CD4-positive, alpha-beta memory T cell (primary cell): ENCODE measurements at regions of chr3 and their contacts with region 1.

Region 1: DNA sequence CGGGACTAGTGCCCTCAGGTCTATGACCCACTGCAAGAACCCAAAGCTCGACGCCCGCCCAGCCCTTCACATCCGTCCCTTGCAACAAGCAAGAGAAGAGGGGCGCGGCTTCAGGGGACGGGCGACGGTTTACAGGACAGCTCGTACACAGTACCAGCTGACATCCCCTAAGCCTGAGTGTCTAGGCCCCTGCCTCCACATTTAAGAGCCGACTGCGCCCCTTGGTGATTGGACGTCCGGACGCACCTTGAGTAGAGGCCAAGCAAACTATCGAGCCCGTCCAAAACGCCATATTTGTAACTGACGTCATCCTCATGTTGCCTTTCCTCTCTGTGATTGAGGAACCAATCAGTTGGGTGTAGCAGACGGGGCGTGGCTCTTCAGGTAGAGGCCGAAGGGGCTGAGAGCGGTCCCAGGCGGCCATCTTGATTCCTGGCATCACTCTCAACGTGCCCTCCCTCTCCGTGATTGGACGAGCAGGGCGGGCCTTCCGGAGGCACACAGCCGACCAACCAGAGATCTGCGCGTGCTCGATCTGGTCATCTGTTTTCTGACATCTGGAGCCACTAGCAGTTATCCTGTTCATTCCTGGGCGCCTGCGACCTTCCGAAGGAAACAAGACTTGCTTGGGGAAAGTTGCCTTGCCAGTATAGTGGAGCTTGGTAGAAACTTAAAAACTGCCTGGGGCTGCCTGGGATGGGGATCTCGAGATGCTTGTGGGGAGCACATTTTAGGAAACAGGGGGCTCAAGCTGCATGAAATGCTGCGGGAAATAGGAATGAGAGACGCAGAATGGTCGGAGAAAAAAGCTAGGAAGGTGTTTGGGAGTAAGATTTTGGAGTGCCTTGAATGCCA is 4.0 kb upstream of the RPL14 start:
- DNase-seq: peak; percentile 92 to 99 (median 96)
- H3K4me3 ChIP-seq: peak overlapping the region; percentile 80 to 81
- H3K4me3 Mint-ChIP-seq: peak overlapping the region; percentile 88 to 98 (median 94)
- H3K27ac ChIP-seq: peak overlapping the region; percentile 93
- H3K27ac Mint-ChIP-seq: peak overlapping the region; percentile 93 to 100 (median 99)
- H3K4me1 ChIP-seq: peaks cover 30% of the 10 kb centered on the region
- H3K4me1 Mint-ChIP-seq: peaks cover 23 to 47% (median 35%) of the 10 kb centered on the region in 4 donors
- H3K27me3 ChIP-seq: no peaks in the 10 kb centered on the region
- H3K27me3 Mint-ChIP-seq: no peaks in the 10 kb centered on the region

Region 2: GRCh38 chr3:39383045-39383880 is 1069.8 kb before region 1 on chr3 and contains the start of gene SLC25A38:
- CTCF ChIA-PET with region 1: no interaction called
- POLR2A ChIA-PET with region 1: no interaction called
- intact Hi-C with region 1: loop called (anchors 10 kb)
- DNase-seq: peak; percentile 82 to 90 (median 85)
- H3K4me3 ChIP-seq: peak within 1 kb of the TSS; percentile 91 to 92
- H3K4me3 Mint-ChIP-seq: peak within 1 kb of the TSS; percentile 96 to 100 (median 98)
- H3K27ac ChIP-seq: peak within 1 kb of the TSS; percentile 93
- H3K27ac Mint-ChIP-seq: peak within 1 kb of the TSS; percentile 97 to 100 (median 100)
- H3K4me1 ChIP-seq: peaks cover 46% of the 10 kb centered on the region
- H3K4me1 Mint-ChIP-seq: peaks cover 31 to 53% (median 44%) of the 10 kb centered on the region in 4 donors
- H3K27me3 ChIP-seq: no peaks in the 10 kb centered on the region
- H3K27me3 Mint-ChIP-seq: no peaks in the 10 kb centered on the region
- total RNA-seq, gene SLC25A38: 46.0 to 53.5 TPM

Region 3: GRCh38 chr3:40309418-40309924 is 143.6 kb before region 1 on chr3 and contains the start of gene EIF1B:
- CTCF ChIA-PET with region 1: interaction called, 8 read pairs
- POLR2A ChIA-PET with region 1: interaction called, 10 read pairs
- intact Hi-C with region 1: loop called (anchors 1 kb)
- DNase-seq: peak; percentile 96 to 99 (median 98)
- H3K4me3 ChIP-seq: peak within 1 kb of the TSS; percentile 68 to 77
- H3K4me3 Mint-ChIP-seq: peak within 1 kb of the TSS; percentile 98 to 100 (median 100)
- H3K27ac ChIP-seq: peak within 1 kb of the TSS; percentile 95
- H3K27ac Mint-ChIP-seq: peak within 1 kb of the TSS; percentile 99 to 100 (median 100)
- H3K4me1 ChIP-seq: peaks cover 32% of the 10 kb centered on the region
- H3K4me1 Mint-ChIP-seq: peaks cover 13 to 48% (median 25%) of the 10 kb centered on the region in 4 donors
- H3K27me3 ChIP-seq: no peaks in the 10 kb centered on the region
- H3K27me3 Mint-ChIP-seq: no peaks in the 10 kb centered on the region
- total RNA-seq, gene EIF1B: 61.2 TPM

Region 4: GRCh38 chr3:40476478-40477470 is 23.7 kb after region 1 on chr3 and contains the start of gene ZNF619:
- CTCF ChIA-PET with region 1: no interaction called
- POLR2A ChIA-PET with region 1: interaction called, 22 read pairs
- intact Hi-C with region 1: loop called (anchors 1 kb)
- DNase-seq: peak; percentile 52 to 67 (median 59)
- H3K4me3 ChIP-seq: peak within 1 kb of the TSS; percentile 19 to 60
- H3K4me3 Mint-ChIP-seq: peak within 1 kb of the TSS; percentile 91 to 95 (median 94)
- H3K27ac ChIP-seq: peak within 1 kb of the TSS; percentile 68
- H3K27ac Mint-ChIP-seq: peak within 1 kb of the TSS; percentile 82 to 98 (median 95)
- H3K4me1 ChIP-seq: peaks cover 16% of the 10 kb centered on the region
- H3K4me1 Mint-ChIP-seq: peaks cover 14 to 38% (median 22%) of the 10 kb centered on the region in 4 donors
- H3K27me3 ChIP-seq: no peaks in the 10 kb centered on the region
- H3K27me3 Mint-ChIP-seq: no peaks in the 10 kb centered on the region
- total RNA-seq, gene ZNF619: 14.0 to 16.6 TPM

Region 5: DNA sequence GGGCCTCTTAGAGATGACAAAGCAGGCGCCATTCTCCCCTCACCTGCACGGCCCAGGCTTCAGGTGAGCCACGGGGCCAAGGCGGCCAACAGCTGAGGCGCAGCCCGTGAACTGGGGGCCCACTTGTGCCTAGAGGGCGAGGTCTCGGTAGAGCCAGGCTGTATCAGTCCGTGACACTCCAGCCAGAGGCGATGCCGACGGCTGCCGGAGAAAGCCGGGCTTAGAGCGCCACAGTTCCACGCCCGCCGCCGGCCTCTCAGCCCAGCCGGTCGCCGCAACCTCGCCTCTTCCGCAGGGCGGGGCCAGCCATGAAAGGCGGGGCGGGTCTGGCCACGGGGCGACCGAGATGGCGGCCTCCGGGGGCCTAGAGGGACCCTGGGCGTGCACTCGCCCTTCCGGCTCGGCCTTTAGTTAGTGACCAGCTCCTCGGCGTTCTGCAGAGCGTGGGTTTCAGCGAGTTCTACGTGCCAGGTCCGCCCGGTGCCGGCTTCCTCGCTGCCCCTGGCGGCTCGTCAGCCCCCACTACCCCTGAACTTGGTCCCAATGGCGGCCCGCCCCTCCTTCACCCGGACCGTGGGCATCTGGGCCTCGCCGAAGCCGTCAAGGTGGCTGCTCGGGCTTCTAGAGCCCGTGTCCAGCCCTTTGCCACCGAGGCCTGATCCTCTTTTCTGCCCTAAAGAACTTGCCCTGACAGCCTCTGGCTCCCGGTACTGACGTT is 71.6 kb after region 1 on chr3 and contains the start of gene ZNF621:
- CTCF ChIA-PET with region 1: interaction called, 4 read pairs
- POLR2A ChIA-PET with region 1: interaction called, 38 read pairs
- intact Hi-C with region 1: loop called (anchors 1 kb)
- DNase-seq: peak; percentile 67 to 83 (median 77)
- H3K4me3 ChIP-seq: peak within 1 kb of the TSS; percentile 62 to 89
- H3K4me3 Mint-ChIP-seq: peak within 1 kb of the TSS; percentile 92 to 97 (median 95)
- H3K27ac ChIP-seq: peak within 1 kb of the TSS; percentile 75
- H3K27ac Mint-ChIP-seq: peak within 1 kb of the TSS; percentile 79 to 98 (median 97)
- H3K4me1 ChIP-seq: peaks cover 21% of the 10 kb centered on the region
- H3K4me1 Mint-ChIP-seq: peaks cover 19 to 34% (median 28%) of the 10 kb centered on the region in 4 donors
- H3K27me3 ChIP-seq: no peaks in the 10 kb centered on the region
- H3K27me3 Mint-ChIP-seq: no peaks in the 10 kb centered on the region
- total RNA-seq, gene ZNF621: 23.7 to 27.4 TPM

Region 6: DNA sequence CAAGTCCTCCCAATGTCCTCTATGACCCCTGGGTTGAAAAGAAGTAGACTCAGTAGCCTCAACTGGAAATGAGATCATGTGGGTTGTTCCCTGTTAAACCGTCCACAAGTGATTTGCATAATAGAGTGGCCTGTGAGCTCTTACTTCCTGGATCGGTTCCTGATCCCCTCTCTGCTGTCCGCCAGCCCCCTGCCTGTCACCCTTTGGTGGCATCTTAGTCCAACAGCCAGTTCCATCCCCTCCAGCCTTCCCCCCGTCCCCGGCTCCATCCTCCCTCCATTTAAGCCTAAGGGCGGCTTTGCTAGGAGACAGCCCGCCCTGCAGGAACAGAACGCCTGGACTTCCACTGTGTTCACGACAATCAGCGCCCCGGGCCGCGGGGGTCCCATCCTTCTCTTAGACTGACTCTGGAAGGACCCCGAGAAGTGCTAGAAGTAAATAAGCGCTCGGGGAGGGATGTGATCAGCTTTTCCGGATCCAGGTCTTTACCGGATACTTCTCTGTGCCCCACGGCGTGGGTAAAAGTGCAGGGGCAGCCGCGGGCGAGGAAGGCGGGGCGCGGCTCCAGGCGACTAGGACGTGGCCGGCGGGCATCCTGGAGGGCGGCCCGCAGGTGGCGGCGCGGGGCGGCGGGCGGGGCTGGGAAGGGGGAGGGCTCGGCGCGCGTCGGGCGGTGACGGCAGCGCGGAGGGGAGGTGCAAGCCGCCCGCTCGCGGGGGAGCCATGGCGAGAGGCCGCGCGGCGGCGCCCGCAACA is 1560.0 kb after region 1 on chr3:
- CTCF ChIA-PET with region 1: no interaction called
- POLR2A ChIA-PET with region 1: interaction called, 4 read pairs
- intact Hi-C with region 1: loop called (anchors 5 kb)
- DNase-seq: peak; percentile 64 to 70 (median 66)
- H3K4me3 ChIP-seq: peak overlapping the region; percentile 50 to 85
- H3K4me3 Mint-ChIP-seq: peak overlapping the region; percentile 87 to 96 (median 92)
- H3K27ac ChIP-seq: peak overlapping the region; percentile 63
- H3K27ac Mint-ChIP-seq: peak overlapping the region; percentile 95 to 98 (median 97)
- H3K4me1 ChIP-seq: peaks cover 32% of the 10 kb centered on the region
- H3K4me1 Mint-ChIP-seq: peaks cover 24 to 45% (median 36%) of the 10 kb centered on the region in 4 donors
- H3K27me3 ChIP-seq: no peaks in the 10 kb centered on the region
- H3K27me3 Mint-ChIP-seq: no peaks in the 10 kb centered on the region